Activated CD4-positive, alpha-beta T cell treated with anti-CD3 and anti-CD28 coated beads, Interleukin-2, amount 10 ng/mL, durations not matched to agents 24 days and 14 days (primary cell): ENCODE measurements at regions of chr12 and their contacts with region 1.

Region 1: GRCh38 chr12:31728917-31729640 is at the start of gene AMN1:
- DNase-seq: peak; percentile 100
- H3K4me3 Mint-ChIP-seq: peak within 1 kb of the TSS; percentile 95
- H3K27ac Mint-ChIP-seq: peak within 1 kb of the TSS; percentile 99
- H3K4me1 Mint-ChIP-seq: peaks cover 44% of the 10 kb centered on the region
- H3K27me3 Mint-ChIP-seq: no peaks in the 10 kb centered on the region
- total RNA-seq, gene AMN1: 2.3 and 2.4 TPM in 2 replicates

Region 2: GRCh38 chr12:31325877-31326631 is 403.0 kb before region 1 on chr12 and contains the start of gene SINHCAF:
- intact Hi-C with region 1: loop called (anchors 1 kb)
- DNase-seq: peak; percentile 100
- H3K4me3 Mint-ChIP-seq: peak within 1 kb of the TSS; percentile 99
- H3K27ac Mint-ChIP-seq: peak within 1 kb of the TSS; percentile 100
- H3K4me1 Mint-ChIP-seq: peaks cover 30% of the 10 kb centered on the region
- H3K27me3 Mint-ChIP-seq: peaks cover 12% of the 10 kb centered on the region
- total RNA-seq, gene SINHCAF: 261 and 277 TPM in 2 replicates

Region 3: GRCh38 chr12:31682136-31682962 is 46.7 kb before region 1 on chr12:
- intact Hi-C with region 1: loop called (anchors 5 kb)
- DNase-seq: peak; percentile 91
- H3K4me3 Mint-ChIP-seq: no peak overlapping the region
- H3K27ac Mint-ChIP-seq: peak overlapping the region; percentile 54
- H3K4me1 Mint-ChIP-seq: peaks cover 10% of the 10 kb centered on the region
- H3K27me3 Mint-ChIP-seq: no peaks in the 10 kb centered on the region

Region 4: GRCh38 chr12:32025906-32026305 is 296.8 kb after region 1 on chr12:
- intact Hi-C with region 1: loop called (anchors 5 kb)
- DNase-seq: peak; percentile 88
- H3K4me3 Mint-ChIP-seq: peak overlapping the region; percentile 23
- H3K27ac Mint-ChIP-seq: peak overlapping the region; percentile 52
- H3K4me1 Mint-ChIP-seq: peaks cover 28% of the 10 kb centered on the region
- H3K27me3 Mint-ChIP-seq: no peaks in the 10 kb centered on the region

Region 5: GRCh38 chr12:32139064-32139421 is 410.0 kb after region 1 on chr12:
- intact Hi-C with region 1: loop called (anchors 10 kb)
- DNase-seq: peak; percentile 79
- H3K4me3 Mint-ChIP-seq: peak overlapping the region; percentile 70
- H3K27ac Mint-ChIP-seq: peak overlapping the region; percentile 1
- H3K4me1 Mint-ChIP-seq: peaks cover 18% of the 10 kb centered on the region
- H3K27me3 Mint-ChIP-seq: peaks cover 14% of the 10 kb centered on the region

Region 6: DNA sequence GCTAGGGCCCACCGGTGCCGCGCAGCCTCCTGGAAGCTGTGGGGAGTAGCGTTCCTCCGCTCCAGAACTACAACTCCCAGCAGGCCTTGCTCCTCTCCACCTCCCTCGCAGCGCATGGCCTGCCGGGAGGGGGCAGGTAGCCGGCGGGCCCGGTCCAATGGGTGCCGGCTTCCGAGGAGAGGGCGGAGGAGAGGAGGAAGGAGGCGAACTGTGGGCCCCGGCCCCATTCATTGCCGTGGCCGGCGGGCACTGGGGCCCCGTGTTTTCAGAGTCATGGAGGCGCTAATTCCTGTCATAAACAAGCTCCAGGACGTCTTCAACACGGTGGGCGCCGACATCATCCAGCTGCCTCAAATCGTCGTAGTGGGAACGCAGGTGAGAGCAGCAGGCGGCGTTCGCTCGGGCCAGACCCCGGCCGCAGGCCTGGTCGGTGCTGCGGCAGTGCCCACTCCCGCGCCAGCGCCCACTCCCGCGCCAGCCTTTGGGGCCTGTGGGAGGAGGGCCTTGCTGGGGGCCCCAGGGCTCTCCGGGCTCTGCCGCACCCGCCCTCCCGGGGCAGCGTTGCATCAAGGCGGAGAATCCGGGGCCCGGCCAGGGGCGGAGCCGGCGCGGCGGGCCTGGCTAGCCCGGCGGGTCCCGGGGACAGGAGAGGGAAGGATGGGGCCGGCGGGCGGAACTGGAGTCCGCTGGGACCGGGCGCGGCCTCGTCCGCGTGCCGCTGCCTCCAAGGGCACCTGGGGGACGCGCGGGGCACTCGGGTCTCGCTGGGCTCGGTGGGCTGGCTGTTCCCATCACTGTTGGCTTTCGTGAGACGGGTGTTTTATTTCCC is 950.2 kb after region 1 on chr12 and contains the start of gene DNM1L:
- intact Hi-C with region 1: loop called (anchors 5 kb)
- DNase-seq: peak; percentile 98
- H3K4me3 Mint-ChIP-seq: peak within 1 kb of the TSS; percentile 88
- H3K27ac Mint-ChIP-seq: peak within 1 kb of the TSS; percentile 93
- H3K4me1 Mint-ChIP-seq: peaks cover 21% of the 10 kb centered on the region
- H3K27me3 Mint-ChIP-seq: no peaks in the 10 kb centered on the region
- total RNA-seq, gene DNM1L: 83.3 and 90.7 TPM in 2 replicates